CD8-positive, alpha-beta T cell (primary cell): ENCODE measurements at regions of chr1 and their contacts with region 1.

Region 1: DNA sequence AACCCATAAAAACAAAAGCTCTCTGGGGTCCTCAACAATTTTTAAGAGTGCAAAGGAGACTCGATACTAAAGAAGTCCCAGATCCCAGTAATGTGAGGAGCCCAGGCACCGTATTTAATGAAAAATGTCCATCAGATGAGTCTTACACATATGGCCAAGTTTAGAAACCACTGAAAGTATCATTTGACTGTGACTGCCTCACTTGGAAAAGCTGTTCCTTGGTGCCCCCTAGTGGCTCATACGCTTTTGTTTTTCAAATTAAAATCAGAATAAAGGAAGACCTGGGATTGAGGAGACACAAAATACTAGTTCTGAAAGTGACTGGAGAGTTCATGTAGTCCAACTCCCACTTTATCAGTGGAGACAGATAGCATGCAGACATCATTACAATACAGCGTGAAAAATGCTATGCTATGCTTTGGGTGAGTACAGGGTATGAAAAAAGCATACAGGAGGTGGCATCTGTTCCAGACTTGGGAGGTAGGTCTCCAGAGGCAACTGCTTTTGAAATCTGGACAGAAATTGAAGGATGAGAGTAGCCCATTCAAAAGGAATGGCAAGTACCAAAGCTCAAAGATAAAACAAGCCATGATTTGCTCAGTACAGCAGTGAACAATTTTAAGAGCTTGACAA is 33.8 kb downstream of the GDAP2 start:
- DNase-seq: peak; percentile 11 to 70 (median 54)
- ATAC-seq: peak; percentile 48
- H3K4me3 ChIP-seq: no peak overlapping the region
- H3K4me3 Mint-ChIP-seq: no peak overlapping the region
- H3K27ac ChIP-seq: no peak overlapping the region
- H3K27ac Mint-ChIP-seq: no peak overlapping the region
- H3K4me1 ChIP-seq: no peaks in the 10 kb centered on the region
- H3K4me1 Mint-ChIP-seq: peaks cover 4% of the 10 kb centered on the region
- H3K27me3 ChIP-seq: no peaks in the 10 kb centered on the region
- H3K27me3 Mint-ChIP-seq: no peaks in the 10 kb centered on the region
- CTCF ChIP-seq: peak; percentile 84

Region 2: GRCh38 chr1:117512743-117513321 is 382.8 kb before region 1 on chr1:
- CTCF ChIA-PET with region 1: interaction called, 4 read pairs
- POLR2A ChIA-PET with region 1: no interaction called
- intact Hi-C with region 1: loop called (anchors 1 kb)
- DNase-seq: peak in 2 of 9 experiments; percentile 35 to 46
- ATAC-seq: peak; percentile 46
- H3K4me3 ChIP-seq: no peak overlapping the region
- H3K4me3 Mint-ChIP-seq: no peak overlapping the region
- H3K27ac ChIP-seq: no peak overlapping the region
- H3K27ac Mint-ChIP-seq: no peak overlapping the region
- H3K4me1 ChIP-seq: no peaks in the 10 kb centered on the region
- H3K4me1 Mint-ChIP-seq: no peaks in the 10 kb centered on the region
- H3K27me3 ChIP-seq: no peaks in the 10 kb centered on the region
- H3K27me3 Mint-ChIP-seq: no peaks in the 10 kb centered on the region
- CTCF ChIP-seq: peak; percentile 80

Region 3: DNA sequence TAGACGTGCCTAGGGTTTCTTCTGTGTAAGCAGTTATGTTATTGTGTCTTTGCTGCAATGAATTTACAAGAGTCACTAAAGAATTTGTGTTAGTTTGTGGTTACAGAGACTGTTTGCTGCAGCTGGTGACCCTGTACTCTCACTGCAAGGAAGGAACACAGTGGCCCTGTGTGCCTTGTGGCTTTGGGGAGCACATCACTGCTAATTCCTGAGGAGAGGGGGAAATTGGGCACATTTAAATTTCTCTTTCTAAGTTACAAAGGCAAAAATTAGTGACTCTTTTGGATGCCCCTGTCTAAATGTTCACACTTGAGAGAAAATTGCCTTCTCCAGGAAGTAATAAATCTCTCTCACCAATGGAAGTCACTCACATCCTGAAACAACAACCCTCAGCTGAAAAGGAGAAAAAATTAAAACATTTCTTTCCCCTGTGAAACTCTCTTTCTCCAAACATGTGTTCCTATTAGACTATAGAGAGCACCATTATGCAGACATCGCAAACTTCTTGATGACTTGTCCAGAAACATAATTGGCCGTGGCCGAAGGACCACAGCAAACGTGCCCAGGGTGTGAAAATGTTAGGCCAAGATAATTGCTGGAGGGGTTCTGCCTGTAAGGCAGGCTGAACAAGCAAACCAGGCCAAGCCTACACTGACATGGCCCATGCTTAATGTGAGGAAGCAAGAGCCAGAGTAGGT is 321.7 kb after region 1 on chr1:
- CTCF ChIA-PET with region 1: no interaction called
- POLR2A ChIA-PET with region 1: no interaction called
- intact Hi-C with region 1: no loop called
- DNase-seq: no peak
- ATAC-seq: no peak
- H3K4me3 ChIP-seq: no peak overlapping the region
- H3K4me3 Mint-ChIP-seq: no peak overlapping the region
- H3K27ac ChIP-seq: no peak overlapping the region
- H3K27ac Mint-ChIP-seq: no peak overlapping the region
- H3K4me1 ChIP-seq: no peaks in the 10 kb centered on the region
- H3K4me1 Mint-ChIP-seq: no peaks in the 10 kb centered on the region
- H3K27me3 ChIP-seq: no peaks in the 10 kb centered on the region
- H3K27me3 Mint-ChIP-seq: peaks cover 5% of the 10 kb centered on the region
- CTCF ChIP-seq: no peak